ENCODE measurements at regions of chr1 and their contacts with region 1.

Region 1: GRCh38 chr1:28877132-28877781 is 37.1 kb upstream of the EPB41 start:
- DNase-seq: peak; percentile 83
- ATAC-seq: peak; percentile 90
- H3K4me3 Mint-ChIP-seq: no peak overlapping the region
- H3K27ac Mint-ChIP-seq: no peak overlapping the region
- H3K4me1 Mint-ChIP-seq: peaks cover 6% of the 10 kb centered on the region
- H3K27me3 Mint-ChIP-seq: peaks cover 7% of the 10 kb centered on the region

Region 2: GRCh38 chr1:28718586-28719331 is 158.5 kb before region 1 on chr1:
- CTCF ChIA-PET with region 1: no interaction called
- POLR2A ChIA-PET with region 1: no interaction called
- DNase-seq: no peak
- ATAC-seq: no peak
- H3K4me3 Mint-ChIP-seq: no peak overlapping the region
- H3K27ac Mint-ChIP-seq: no peak overlapping the region
- H3K4me1 Mint-ChIP-seq: no peaks in the 10 kb centered on the region
- H3K27me3 Mint-ChIP-seq: no peaks in the 10 kb centered on the region

Region 3: GRCh38 chr1:28756846-28757245 is 120.4 kb before region 1 on chr1:
- CTCF ChIA-PET with region 1: interaction called, 11 read pairs
- POLR2A ChIA-PET with region 1: no interaction called
- DNase-seq: no peak
- ATAC-seq: no peak
- H3K4me3 Mint-ChIP-seq: no peak overlapping the region
- H3K27ac Mint-ChIP-seq: no peak overlapping the region
- H3K4me1 Mint-ChIP-seq: peaks cover 13% of the 10 kb centered on the region
- H3K27me3 Mint-ChIP-seq: no peaks in the 10 kb centered on the region

Region 4: GRCh38 chr1:28855469-28855951 is 21.7 kb before region 1 on chr1:
- CTCF ChIA-PET with region 1: interaction called, 11 read pairs
- POLR2A ChIA-PET with region 1: no interaction called
- DNase-seq: no peak
- ATAC-seq: no peak
- H3K4me3 Mint-ChIP-seq: no peak overlapping the region
- H3K27ac Mint-ChIP-seq: no peak overlapping the region
- H3K4me1 Mint-ChIP-seq: peaks cover 7% of the 10 kb centered on the region
- H3K27me3 Mint-ChIP-seq: peaks cover 9% of the 10 kb centered on the region

Region 5: DNA sequence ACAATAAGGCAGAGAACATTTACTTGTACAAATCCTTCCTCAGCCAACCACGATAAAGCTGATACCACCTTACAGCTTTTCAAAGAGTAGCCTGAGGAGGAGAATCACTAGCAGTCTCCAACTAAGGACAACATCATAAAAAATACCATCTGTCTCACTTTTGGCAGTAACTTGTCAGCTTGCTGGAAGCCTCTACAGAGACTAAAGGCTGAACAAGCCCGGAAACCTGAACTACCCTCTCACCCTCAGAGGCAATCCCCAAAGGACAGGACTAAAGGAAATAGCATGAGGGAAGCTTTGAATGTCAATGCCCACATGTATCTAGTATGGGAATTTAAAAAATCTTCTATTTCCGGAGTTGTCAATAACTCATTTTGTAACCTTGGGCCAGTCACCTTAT is 293.8 kb after region 1 on chr1:
- CTCF ChIA-PET with region 1: interaction called, 10 read pairs
- POLR2A ChIA-PET with region 1: no interaction called
- DNase-seq: no peak
- ATAC-seq: no peak
- H3K4me3 Mint-ChIP-seq: peak overlapping the region; percentile 52
- H3K27ac Mint-ChIP-seq: peak overlapping the region; percentile 71
- H3K4me1 Mint-ChIP-seq: peaks cover 64% of the 10 kb centered on the region
- H3K27me3 Mint-ChIP-seq: no peaks in the 10 kb centered on the region

Region 6: GRCh38 chr1:29202584-29203340 is 325.5 kb after region 1 on chr1:
- CTCF ChIA-PET with region 1: interaction called, 72 read pairs
- POLR2A ChIA-PET with region 1: no interaction called
- DNase-seq: peak; percentile 92
- ATAC-seq: peak; percentile 95
- H3K4me3 Mint-ChIP-seq: no peak overlapping the region
- H3K27ac Mint-ChIP-seq: peak overlapping the region; percentile 36
- H3K4me1 Mint-ChIP-seq: peaks cover 19% of the 10 kb centered on the region
- H3K27me3 Mint-ChIP-seq: no peaks in the 10 kb centered on the region

Measured in activated CD8-positive, alpha-beta T cell treated with anti-CD3 and anti-CD28 coated beads, Interleukin-2, amount 10 ng/mL, durations not matched to agents 7 days and 5 days (primary cell).